ENCODE measurements at regions of chr1 and their contacts with region 1.

Region 1: DNA sequence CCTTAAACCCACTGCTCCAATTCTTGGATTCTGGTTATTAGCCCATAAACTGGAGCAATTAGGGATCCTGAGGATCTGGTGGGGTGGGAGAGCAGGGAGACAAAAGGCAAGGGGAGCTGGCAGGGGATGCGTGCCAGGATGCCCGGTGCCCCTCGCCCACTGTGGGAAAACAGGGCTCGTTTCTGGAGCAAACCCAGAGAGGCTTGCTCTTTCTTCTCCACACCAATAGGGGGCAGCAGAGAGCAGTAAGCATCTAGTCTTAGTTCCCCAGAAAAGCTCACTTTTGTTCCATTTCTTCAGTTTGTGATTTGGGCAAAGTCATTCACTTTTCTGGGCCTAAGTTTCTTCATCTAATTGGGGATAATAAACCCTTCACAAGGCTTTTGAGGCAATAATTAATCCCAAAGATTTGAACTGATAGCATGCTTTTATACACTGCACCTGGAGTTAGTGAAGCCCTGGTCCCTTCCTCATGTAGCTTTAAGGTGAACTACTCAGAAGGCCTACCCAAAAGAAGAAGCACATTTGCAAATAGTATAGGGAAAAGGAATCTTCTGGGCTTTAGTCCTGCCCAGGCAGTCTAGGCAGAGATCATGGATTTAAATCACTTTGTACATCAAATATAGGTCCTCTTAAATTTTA is 160.6 kb upstream of the USP24 start:
- DNase-seq: peak; percentile 41
- H3K4me3 ChIP-seq: no peak overlapping the region
- H3K27ac ChIP-seq: no peak overlapping the region
- H3K4me1 ChIP-seq: no peaks in the 10 kb centered on the region
- H3K27me3 ChIP-seq: no peaks in the 10 kb centered on the region
- CTCF ChIP-seq: peak; percentile 87 to 96
- POLR2A ChIP-seq: no peak

Region 2: DNA sequence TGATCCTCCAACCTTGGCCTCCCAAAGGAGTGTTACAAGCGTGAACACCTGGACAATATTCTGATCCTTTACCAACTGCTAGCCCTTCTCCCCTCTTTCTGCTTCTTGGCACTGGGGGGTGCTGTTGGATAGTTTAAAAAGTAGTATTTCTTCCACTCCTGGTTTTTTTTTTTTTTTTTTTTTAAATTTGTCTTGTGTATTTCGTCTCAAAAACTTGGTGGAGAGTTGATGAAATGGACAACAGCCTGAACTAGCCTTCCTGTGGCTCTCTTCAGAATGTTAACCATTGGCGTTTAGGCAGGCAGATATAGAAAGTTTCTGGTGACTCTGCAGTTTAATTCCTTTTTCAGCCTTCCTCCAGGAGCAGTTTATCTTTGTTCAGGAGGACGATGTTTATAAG is 90.9 kb before region 1 on chr1:
- CTCF ChIA-PET with region 1: interaction called, 17 read pairs
- POLR2A ChIA-PET with region 1: no interaction called
- dilution Hi-C with region 1: no loop called
- intact Hi-C with region 1: loop called (anchors 1 kb)
- DNase-seq: peak; percentile 64
- H3K4me3 ChIP-seq: no peak overlapping the region
- H3K27ac ChIP-seq: no peak overlapping the region
- H3K4me1 ChIP-seq: peaks cover 12% of the 10 kb centered on the region
- H3K27me3 ChIP-seq: no peaks in the 10 kb centered on the region
- CTCF ChIP-seq: peak; percentile 56 to 59
- POLR2A ChIP-seq: no peak

Region 3: GRCh38 chr1:55386456-55386855 is 10.7 kb after region 1 on chr1:
- CTCF ChIA-PET with region 1: interaction called, 14 read pairs
- POLR2A ChIA-PET with region 1: no interaction called
- dilution Hi-C with region 1: no loop called
- intact Hi-C with region 1: no loop called
- DNase-seq: no peak
- H3K4me3 ChIP-seq: no peak overlapping the region
- H3K27ac ChIP-seq: no peak overlapping the region
- H3K4me1 ChIP-seq: no peaks in the 10 kb centered on the region
- H3K27me3 ChIP-seq: no peaks in the 10 kb centered on the region
- CTCF ChIP-seq: no peak
- POLR2A ChIP-seq: no peak

Region 4: DNA sequence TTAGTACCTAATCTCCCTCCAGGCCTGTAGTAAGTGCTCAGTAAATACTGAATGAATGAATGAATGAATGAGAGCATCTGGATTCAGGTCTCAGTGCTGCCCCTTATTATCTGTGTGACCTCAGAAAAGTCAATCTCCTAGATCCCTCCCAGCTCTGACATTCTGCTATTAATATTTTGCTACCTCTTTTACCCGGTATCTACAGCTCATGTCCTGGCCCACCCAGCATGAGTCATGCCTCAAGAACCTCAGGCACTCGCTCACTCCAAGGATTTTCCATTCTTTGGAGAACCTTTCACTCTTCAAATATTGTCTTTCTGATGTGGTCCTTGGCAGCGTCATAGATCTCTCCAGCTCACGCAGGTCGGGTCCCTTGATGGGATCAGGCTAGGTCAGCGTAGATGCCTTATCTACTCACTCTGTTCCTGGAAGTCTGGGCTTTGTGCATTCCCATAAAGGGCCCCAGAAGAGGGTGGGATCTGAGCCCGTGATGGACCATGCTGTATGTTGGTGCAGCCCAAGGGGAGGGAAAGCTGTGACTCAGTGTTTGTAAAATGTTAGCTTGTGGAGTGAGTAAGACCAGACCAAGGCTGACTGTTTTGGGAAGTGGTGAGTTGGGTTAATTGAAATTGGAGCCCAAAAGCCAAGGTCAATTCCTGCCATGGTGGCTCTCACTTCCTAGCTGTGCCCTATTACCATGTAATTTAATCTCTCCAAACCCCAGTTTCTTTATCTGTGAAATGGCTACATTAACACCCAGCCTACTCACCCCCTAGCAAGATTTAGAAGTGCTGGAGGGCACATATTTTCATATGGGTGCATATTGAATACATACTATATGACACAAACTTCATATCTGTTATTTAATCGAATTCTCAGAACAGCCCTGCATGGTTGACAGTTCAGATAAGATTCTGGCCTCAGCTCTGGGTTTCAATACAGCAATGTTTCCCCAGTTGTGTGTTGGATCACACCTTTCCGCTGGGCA is 53.5 kb after region 1 on chr1:
- CTCF ChIA-PET with region 1: interaction called, 22 read pairs
- POLR2A ChIA-PET with region 1: interaction called, 3 read pairs
- dilution Hi-C with region 1: no loop called
- intact Hi-C with region 1: no loop called
- DNase-seq: peak; percentile 99
- H3K4me3 ChIP-seq: no peak overlapping the region
- H3K27ac ChIP-seq: peak overlapping the region; percentile 93
- H3K4me1 ChIP-seq: peaks cover 32% of the 10 kb centered on the region
- H3K27me3 ChIP-seq: no peaks in the 10 kb centered on the region
- CTCF ChIP-seq: no peak
- POLR2A ChIP-seq: peak; percentile 54

Region 5: DNA sequence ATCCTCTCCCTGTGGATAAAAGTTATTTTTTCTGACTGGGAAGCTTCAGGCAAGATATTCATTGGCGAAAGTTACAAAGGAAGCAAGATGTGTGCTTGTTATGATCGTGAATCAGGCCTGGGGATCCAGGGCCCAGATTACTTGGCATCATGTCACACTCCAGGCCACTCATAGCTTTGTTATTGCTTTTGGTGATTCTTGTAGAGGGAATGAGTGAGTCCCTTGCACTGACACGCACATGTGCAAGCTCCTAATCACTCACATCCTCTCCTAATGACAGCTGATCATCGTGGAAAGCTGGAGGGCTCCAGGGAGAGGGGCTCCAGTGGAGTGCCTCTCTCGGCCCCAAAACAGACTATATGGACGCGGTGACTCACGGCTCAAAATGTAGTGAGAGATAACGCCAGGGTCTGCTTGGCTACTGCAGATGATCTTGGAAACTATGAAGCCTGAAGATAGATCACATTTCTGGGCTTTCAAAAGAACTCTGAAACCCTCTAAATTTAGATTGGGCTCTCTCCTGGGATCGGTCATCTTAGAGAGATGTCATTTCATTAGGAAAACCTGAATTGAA is 320.5 kb after region 1 on chr1:
- CTCF ChIA-PET with region 1: interaction called, 4 read pairs
- POLR2A ChIA-PET with region 1: no interaction called
- dilution Hi-C with region 1: no loop called
- intact Hi-C with region 1: loop called (anchors 10 kb)
- DNase-seq: no peak
- H3K4me3 ChIP-seq: no peak overlapping the region
- H3K27ac ChIP-seq: no peak overlapping the region
- H3K4me1 ChIP-seq: no peaks in the 10 kb centered on the region
- H3K27me3 ChIP-seq: no peaks in the 10 kb centered on the region
- CTCF ChIP-seq: no peak
- POLR2A ChIP-seq: no peak

Region 6: GRCh38 chr1:56584910-56585528 is 1209.3 kb after region 1 on chr1:
- CTCF ChIA-PET with region 1: interaction called, 174 read pairs
- POLR2A ChIA-PET with region 1: no interaction called
- dilution Hi-C with region 1: no loop called
- intact Hi-C with region 1: loop called (anchors 1 kb)
- DNase-seq: peak; percentile 67
- H3K4me3 ChIP-seq: no peak overlapping the region
- H3K27ac ChIP-seq: no peak overlapping the region
- H3K4me1 ChIP-seq: peaks cover 2% of the 10 kb centered on the region
- H3K27me3 ChIP-seq: no peaks in the 10 kb centered on the region
- CTCF ChIP-seq: peak; percentile 61 to 65
- POLR2A ChIP-seq: no peak

Measured in endothelial cell of umbilical vein (primary cell).